Activated CD4-positive, alpha-beta T cell treated with anti-CD3 and anti-CD28 coated beads, Interleukin-2, amount 10 ng/mL, durations not matched to agents 24 days and 14 days (primary cell): ENCODE measurements at regions of chr2 and their contacts with region 1.

Region 1: GRCh38 chr2:206159346-206160124 is at the starts of genes EEF1B2 and NDUFS1:
- DNase-seq: peak; percentile 99
- H3K4me3 Mint-ChIP-seq: peak within 1 kb of the TSS; percentile 97
- H3K27ac Mint-ChIP-seq: peak within 1 kb of the TSS; percentile 99
- H3K4me1 Mint-ChIP-seq: peaks cover 38% of the 10 kb centered on the region
- H3K27me3 Mint-ChIP-seq: no peaks in the 10 kb centered on the region
- total RNA-seq, gene EEF1B2: 761 and 768 TPM in 2 replicates
- total RNA-seq, gene NDUFS1: 81.5 and 82.6 TPM in 2 replicates

Region 2: GRCh38 chr2:206085742-206086445 is 73.6 kb before region 1 on chr2 and contains the start of gene INO80D:
- intact Hi-C with region 1: loop called (anchors 1 kb)
- DNase-seq: peak; percentile 93
- H3K4me3 Mint-ChIP-seq: peak within 1 kb of the TSS; percentile 100
- H3K27ac Mint-ChIP-seq: peak within 1 kb of the TSS; percentile 100
- H3K4me1 Mint-ChIP-seq: peaks cover 20% of the 10 kb centered on the region
- H3K27me3 Mint-ChIP-seq: no peaks in the 10 kb centered on the region
- total RNA-seq, gene INO80D: 26.2 and 27.5 TPM in 2 replicates

Region 3: GRCh38 chr2:206143451-206143850 is 16.1 kb before region 1 on chr2:
- intact Hi-C with region 1: no loop called
- DNase-seq: no peak
- H3K4me3 Mint-ChIP-seq: no peak overlapping the region
- H3K27ac Mint-ChIP-seq: no peak overlapping the region
- H3K4me1 Mint-ChIP-seq: no peaks in the 10 kb centered on the region
- H3K27me3 Mint-ChIP-seq: no peaks in the 10 kb centered on the region

Region 4: GRCh38 chr2:206274434-206275268 is 115.1 kb after region 1 on chr2 and contains the start of gene ZDBF2:
- intact Hi-C with region 1: loop called (anchors 2 kb)
- DNase-seq: peak; percentile 89
- H3K4me3 Mint-ChIP-seq: peak within 1 kb of the TSS; percentile 86
- H3K27ac Mint-ChIP-seq: peak within 1 kb of the TSS; percentile 89
- H3K4me1 Mint-ChIP-seq: peaks cover 11% of the 10 kb centered on the region
- H3K27me3 Mint-ChIP-seq: peaks cover 55% of the 10 kb centered on the region
- total RNA-seq, gene ZDBF2: 9.9 and 10.5 TPM in 2 replicates

Region 5: DNA sequence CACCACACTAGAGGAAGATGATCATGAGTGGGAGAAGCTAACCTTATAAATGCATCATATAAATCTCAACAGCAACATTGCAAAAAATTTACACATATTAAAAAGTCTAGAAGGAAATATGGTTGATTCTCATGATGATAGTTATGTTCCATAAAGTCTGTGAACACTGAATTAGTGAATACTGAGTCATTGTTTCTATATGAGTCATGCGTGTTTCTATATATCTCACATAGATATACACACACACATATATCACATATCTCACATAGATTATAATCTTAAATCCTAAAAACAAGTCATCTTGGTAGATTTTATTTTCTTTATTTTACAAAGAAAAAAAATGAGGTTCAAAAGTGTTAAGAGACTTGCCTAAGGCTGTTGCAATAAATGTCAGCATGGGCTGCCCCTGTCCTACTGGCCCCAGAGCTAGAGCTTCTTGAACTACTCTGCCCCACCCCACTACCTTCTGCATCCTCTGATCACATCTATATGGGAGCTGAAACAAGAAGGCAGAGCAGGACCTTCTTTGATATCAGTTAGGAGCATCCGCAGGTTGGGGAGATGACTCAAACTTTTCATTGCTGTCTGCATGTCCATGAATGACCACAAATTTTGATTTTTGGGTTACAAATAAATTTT is 202.0 kb after region 1 on chr2:
- intact Hi-C with region 1: loop called (anchors 5 kb)
- DNase-seq: peak; percentile 55
- H3K4me3 Mint-ChIP-seq: no peak overlapping the region
- H3K27ac Mint-ChIP-seq: peak overlapping the region; percentile 36
- H3K4me1 Mint-ChIP-seq: no peaks in the 10 kb centered on the region
- H3K27me3 Mint-ChIP-seq: peaks cover 2% of the 10 kb centered on the region

Region 6: DNA sequence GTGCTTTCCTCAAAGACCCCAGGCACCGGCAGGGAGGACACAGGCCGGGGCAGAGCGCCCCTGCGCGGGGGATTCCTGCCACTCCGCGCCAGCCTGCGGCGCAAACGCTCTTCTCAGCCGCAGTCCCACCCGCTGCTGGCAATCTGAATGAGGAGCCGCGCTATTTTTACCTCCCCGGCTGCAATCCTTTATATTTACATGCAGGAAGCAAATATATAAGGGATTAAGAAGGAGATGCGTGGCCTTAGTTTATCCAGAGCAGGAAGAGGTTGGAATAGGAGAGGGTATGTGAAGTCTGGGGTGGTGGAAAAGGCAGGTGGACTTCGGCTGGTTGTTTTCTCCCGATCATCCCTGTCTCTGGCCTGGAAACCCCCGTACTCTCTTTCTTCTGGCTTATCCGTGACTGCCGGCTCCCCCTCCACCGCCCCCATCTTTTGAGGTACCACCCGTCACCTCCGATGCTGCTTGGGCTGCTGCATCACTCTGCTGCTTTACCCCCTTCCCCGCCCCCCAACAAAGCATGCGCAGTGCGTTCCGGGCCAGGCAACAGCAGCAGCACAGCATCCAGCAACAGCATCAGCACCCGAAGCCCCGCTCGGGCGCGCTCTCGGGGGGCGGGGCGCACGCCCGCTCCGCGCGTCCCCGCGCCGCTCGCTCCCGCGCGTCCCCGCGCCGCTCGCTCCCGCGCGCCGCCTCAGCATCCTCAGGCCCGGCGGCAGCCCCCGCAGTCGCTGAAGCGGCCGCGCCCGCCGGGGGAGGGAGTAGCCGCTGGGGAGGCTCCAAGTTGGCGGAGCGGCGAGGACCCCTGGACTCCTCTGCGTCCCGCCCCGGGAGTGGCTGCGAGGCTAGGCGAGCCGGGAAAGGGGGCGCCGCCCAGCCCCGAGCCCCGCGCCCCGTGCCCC is 283.5 kb after region 1 on chr2 and contains the start of gene ADAM23:
- intact Hi-C with region 1: loop called (anchors 5 kb)
- DNase-seq: peak; percentile 78
- H3K4me3 Mint-ChIP-seq: peak within 1 kb of the TSS; percentile 82
- H3K27ac Mint-ChIP-seq: peak within 1 kb of the TSS; percentile 80
- H3K4me1 Mint-ChIP-seq: peaks cover 9% of the 10 kb centered on the region
- H3K27me3 Mint-ChIP-seq: peaks cover 78% of the 10 kb centered on the region
- total RNA-seq, gene ADAM23: 0.05 and 0.38 TPM in 2 replicates